GM10248 (cell line): ENCODE measurements at regions of chr20 and their contacts with region 1.

Region 1: GRCh38 chr20:31829731-31830130 is 10.6 kb downstream of the MYLK2 start:
- DNase-seq: no peak
- CTCF ChIP-seq: no peak

Region 2: DNA sequence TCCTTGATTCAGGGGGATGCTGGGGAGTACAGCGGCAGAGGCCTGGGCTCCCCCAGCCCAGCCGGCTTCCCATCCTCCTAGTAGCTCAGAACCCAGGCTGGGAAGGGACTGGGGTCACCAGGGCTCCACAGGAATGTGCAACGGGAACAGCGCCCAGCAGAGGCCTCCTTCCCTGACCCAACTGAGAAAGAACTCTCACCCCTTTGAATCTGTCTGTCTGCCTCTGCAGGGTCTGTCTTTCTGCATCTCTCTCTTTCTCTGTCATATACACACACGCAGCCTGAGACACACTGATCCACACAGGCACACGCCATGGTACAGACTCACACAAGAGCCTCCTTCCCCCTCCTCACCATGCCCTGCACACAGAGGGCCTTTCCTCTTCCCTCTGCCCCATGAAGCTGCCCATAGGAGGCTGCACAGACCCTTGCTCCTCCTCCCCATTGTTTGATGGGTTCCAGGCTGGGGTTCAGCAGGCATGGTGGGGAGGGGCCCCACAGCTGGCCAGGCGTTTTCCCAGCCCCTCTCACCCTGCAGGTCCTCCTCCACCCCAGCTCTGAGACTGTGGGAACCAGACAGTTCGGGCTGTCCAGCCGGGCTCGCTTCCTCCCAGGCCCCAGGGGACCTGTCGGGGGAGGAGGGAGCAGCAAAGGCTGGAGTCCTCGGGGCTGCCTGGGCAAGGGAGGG is 12.9 kb after region 1 on chr20:
- CTCF ChIA-PET with region 1: interaction called, 154 read pairs
- POLR2A ChIA-PET with region 1: no interaction called
- DNase-seq: no peak
- CTCF ChIP-seq: no peak

Region 3: DNA sequence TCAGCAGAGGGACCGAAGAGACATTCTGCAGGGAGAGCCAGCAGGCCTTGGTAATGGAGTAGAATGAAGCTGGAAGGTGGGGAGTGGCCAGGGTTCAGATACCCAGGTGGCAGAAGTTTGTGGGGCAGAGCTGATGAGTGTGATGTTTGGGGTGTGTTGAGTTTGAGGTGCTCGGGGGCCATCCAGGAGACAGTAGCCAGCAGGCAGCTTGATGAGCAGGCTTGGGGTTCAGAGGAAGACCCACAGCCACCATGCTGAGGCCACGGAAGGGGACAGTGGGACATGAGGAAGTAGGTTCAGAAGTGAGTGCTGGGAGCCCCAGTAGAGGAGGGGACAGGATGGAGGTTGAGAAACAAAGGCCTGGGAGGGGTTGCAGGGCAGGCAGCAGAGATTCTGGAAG is 26.8 kb after region 1 on chr20:
- CTCF ChIA-PET with region 1: interaction called, 15 read pairs
- POLR2A ChIA-PET with region 1: no interaction called
- DNase-seq: no peak
- CTCF ChIP-seq: no peak